ENCODE measurements at regions of chr12 and their contacts with region 1.

Region 1: DNA sequence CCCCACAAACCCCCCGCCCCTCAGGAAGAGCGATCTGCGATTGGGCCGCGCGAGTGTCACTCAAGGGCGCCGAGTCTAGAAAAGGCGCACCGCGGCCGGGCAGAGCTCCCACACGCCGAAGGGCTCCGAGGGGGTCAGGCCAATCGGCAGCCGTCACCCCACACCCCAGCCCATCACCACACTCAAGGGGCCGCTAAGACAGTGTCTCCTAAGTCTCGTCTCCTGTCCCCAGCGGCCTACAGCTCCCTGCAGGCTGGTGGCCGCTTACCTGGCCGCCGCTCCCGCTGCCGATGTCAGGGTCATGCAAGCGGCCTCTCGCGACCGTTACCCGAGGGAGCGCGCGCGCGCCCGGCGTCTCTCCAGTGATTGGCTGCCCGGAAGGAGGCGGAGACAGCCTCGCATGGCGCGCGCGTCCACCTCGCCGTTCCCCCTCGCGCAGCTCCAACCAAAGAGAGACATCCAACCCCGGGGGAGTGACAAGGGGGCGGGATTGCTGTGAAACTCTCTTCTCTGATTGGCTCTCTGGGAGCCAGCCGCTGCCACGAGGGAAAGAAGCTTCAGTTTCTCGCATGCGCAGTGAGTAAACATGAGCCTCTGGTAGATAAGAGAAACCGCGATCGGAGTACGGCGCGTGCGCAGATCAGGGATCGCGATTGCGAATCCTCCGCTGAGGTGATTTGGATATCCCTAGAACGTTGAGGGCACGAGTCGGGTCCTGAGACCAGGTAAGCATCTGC is at the starts of genes MPHOSPH9 and MTRFR:
- DNase-seq: peak; percentile 95
- H3K4me3 ChIP-seq: peak within 1 kb of the TSS; percentile 76 to 100
- H3K27ac ChIP-seq: peak within 1 kb of the TSS; percentile 76 to 83
- H3K4me1 ChIP-seq: peaks cover 4 to 14% of the 10 kb centered on the region in 2 experiments; a peak in 3 of 4 replicates
- H3K27me3 ChIP-seq: no peaks in the 10 kb centered on the region
- CTCF ChIP-seq: no peak
- EP300 ChIP-seq: no peak
- RAD21 ChIP-seq: no peak
- polyA plus RNA-seq, gene MPHOSPH9: 8.2 and 9.0 TPM in 2 replicates
- polyA plus RNA-seq, gene MTRFR: 6.6 and 7.5 TPM in 2 replicates

Region 2: DNA sequence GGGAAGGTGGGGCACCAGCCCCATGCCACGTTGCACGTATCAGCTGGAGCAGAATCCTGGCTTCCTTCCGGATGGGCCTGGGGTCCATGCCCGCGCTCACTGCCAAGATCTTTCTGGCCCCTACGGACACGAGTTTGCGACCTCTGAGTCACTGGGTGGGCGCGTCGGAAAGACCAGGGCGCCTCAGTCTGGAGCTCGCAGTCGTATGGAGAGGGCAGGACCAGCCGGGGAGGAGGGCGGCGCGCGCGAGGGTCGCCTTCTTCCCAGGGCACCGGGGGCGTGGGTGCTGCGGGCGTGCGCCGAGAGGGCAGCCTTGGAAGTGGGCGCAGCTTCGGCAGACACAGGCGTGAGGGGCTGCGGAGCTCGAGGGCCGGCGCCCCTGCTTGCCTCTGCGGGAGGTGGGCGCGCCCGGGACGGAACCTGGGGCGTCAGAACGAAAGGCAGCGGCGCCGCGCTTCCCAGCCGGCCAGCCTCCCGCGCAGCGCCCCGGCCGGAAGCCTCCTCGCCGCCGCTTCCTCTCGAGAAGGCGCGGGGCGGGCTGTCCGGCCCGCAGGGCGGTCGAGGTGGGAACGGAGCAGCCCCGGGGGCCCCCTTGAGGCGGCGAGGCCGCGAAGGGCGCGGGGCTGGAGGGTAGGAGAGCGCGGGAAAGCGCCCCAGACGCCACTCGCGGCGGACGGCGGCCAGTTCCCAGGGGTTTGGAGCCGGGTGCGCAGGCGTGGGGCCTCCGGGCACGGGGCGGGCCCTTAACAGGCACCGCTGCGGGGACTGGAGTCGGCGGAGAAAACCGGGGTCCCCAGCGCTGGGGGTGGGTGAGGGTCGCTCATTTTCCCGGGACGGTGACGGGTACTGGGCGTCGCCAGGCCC is 252.6 kb before region 1 on chr12 and contains the start of gene ARL6IP4:
- CTCF ChIA-PET with region 1: interaction called, 25 read pairs
- POLR2A ChIA-PET with region 1: interaction called, 9 read pairs
- DNase-seq: peak; percentile 91
- H3K4me3 ChIP-seq: peak within 1 kb of the TSS; percentile 96
- H3K27ac ChIP-seq: peak within 1 kb of the TSS; percentile 51 to 76; a peak in 3 of 4 replicates
- H3K4me1 ChIP-seq: peaks cover 13 to 46% of the 10 kb centered on the region in 2 experiments; a peak in 3 of 4 replicates
- H3K27me3 ChIP-seq: no peaks in the 10 kb centered on the region
- CTCF ChIP-seq: no peak
- EP300 ChIP-seq: no peak
- RAD21 ChIP-seq: no peak
- polyA plus RNA-seq, gene ARL6IP4: 321 and 370 TPM in 2 replicates

Region 3: DNA sequence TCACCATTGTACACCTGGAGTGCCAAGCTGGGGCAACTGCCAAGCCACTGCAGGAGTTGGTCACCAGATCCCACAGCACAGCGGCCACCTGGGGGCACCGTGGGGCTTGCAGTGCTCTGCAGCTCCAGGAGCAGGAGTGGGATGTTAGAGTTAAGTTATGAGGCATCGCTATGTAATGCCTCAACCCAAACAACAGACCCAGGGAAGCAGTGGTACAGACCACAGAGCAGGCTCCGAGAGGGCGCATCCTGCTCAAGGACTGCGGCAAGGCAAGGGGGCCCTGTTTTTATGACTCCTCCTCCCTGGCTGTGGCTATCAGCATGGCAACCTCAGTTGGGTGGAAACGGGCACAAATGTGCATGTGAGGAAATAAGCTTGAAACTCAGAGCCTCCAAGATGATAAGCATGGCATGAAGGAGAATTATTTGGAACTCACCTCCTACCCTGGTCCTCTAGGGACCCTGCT is 189.4 kb before region 1 on chr12:
- CTCF ChIA-PET with region 1: interaction called, 88 read pairs
- POLR2A ChIA-PET with region 1: interaction called, 6 read pairs
- DNase-seq: peak; percentile 77
- H3K4me3 ChIP-seq: no peak overlapping the region
- H3K27ac ChIP-seq: peak overlapping the region in 1 of 2 experiments; percentile 44; a peak in 2 of 4 replicates
- H3K4me1 ChIP-seq: peaks cover 7 to 31% of the 10 kb centered on the region in 2 experiments; a peak in 2 of 4 replicates
- H3K27me3 ChIP-seq: no peaks in the 10 kb centered on the region
- CTCF ChIP-seq: peak; percentile 86
- EP300 ChIP-seq: no peak; a peak in 1 of 4 replicates
- RAD21 ChIP-seq: peak; percentile 92

Region 4: DNA sequence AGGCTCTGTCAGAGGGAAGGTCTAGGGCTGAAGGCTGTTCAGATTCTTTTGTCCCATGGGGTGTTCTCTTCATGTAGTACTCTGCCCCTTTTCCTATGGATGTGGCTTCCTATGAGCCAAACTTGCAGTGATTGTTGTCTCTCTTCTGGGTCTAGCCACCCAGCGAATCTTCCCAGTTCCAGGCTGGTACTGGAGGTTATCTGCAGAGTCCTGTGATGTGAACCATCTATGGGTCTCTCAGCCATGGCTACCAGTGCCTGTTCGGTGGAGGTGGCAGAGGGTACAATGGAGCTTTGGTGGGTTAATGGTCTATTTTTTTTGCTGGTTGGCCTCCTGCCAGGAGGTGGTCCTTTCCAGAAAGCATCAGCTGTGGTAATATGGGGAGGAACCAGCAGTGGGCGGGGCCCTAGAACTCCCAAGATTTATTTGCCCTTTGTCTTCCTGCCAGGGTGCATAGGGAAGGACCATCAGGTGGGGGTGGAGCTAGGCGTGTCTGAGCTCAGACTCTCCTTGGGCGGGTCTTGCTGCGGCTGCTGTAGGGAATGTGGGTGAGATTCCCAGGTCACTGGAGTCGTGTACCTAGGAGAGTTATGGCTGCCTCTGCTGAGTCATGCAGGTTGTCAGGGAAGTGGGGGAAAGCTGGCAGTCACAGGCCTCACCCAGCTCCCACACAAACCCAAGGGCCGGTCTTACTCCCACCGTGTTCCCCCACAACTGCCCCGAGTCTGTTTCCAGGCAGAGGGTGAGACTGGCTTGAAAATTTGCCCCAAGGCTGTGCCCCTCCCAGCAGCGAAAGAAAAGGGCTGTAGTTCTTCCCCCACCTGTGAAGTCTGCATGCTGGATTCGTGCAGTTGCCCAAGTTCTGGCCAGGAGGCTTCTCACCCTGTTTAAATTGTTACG is 17.8 kb after region 1 on chr12:
- CTCF ChIA-PET with region 1: interaction called, 17 read pairs
- POLR2A ChIA-PET with region 1: interaction called, 6 read pairs
- DNase-seq: no peak
- H3K4me3 ChIP-seq: no peak overlapping the region
- H3K27ac ChIP-seq: no peak overlapping the region; a peak in 1 of 4 replicates
- H3K4me1 ChIP-seq: peaks cover 0 to 3% of the 10 kb centered on the region in 2 experiments; a peak in 2 of 4 replicates
- H3K27me3 ChIP-seq: no peaks in the 10 kb centered on the region
- CTCF ChIP-seq: no peak
- EP300 ChIP-seq: no peak
- RAD21 ChIP-seq: no peak

Region 5: DNA sequence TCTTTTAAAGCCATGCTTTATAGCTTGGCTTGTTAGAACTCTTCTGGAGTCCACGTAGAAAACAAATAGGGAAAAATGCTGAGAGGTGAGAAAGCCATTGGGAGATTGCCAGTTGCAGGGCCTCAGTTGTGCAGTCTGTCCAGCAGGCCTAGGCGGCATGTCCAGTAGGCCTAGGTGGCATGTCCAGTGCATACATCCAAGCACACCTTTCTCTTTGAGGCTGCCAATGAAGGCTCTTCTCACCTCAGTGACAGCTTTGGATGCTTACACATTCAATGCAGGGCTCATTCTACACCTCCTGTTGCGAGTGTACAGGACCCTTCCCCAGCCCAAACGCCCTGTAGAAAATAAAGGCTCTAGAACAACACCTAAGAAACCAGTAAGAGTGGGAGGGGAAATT is 25.6 kb after region 1 on chr12:
- CTCF ChIA-PET with region 1: interaction called, 14 read pairs
- POLR2A ChIA-PET with region 1: interaction called, 4 read pairs
- DNase-seq: no peak
- H3K4me3 ChIP-seq: no peak overlapping the region
- H3K27ac ChIP-seq: no peak overlapping the region
- H3K4me1 ChIP-seq: no peaks in the 10 kb centered on the region
- H3K27me3 ChIP-seq: no peaks in the 10 kb centered on the region
- CTCF ChIP-seq: no peak
- EP300 ChIP-seq: no peak
- RAD21 ChIP-seq: no peak

Region 6: GRCh38 chr12:123271001-123271729 is 38.2 kb after region 1 on chr12:
- CTCF ChIA-PET with region 1: interaction called, 14 read pairs
- POLR2A ChIA-PET with region 1: interaction called, 47 read pairs
- DNase-seq: peak; percentile 89
- H3K4me3 ChIP-seq: peak overlapping the region; percentile 83 to 90; a peak in 3 of 4 replicates
- H3K27ac ChIP-seq: peak overlapping the region in 1 of 2 experiments; percentile 99; a peak in 2 of 4 replicates
- H3K4me1 ChIP-seq: peaks cover 5 to 42% of the 10 kb centered on the region in 2 experiments; a peak in 3 of 4 replicates
- H3K27me3 ChIP-seq: no peaks in the 10 kb centered on the region
- CTCF ChIP-seq: peak; percentile 14; the same call in 1 of the 2 replicates
- EP300 ChIP-seq: no peak
- RAD21 ChIP-seq: peak; percentile 54

Region 7: DNA sequence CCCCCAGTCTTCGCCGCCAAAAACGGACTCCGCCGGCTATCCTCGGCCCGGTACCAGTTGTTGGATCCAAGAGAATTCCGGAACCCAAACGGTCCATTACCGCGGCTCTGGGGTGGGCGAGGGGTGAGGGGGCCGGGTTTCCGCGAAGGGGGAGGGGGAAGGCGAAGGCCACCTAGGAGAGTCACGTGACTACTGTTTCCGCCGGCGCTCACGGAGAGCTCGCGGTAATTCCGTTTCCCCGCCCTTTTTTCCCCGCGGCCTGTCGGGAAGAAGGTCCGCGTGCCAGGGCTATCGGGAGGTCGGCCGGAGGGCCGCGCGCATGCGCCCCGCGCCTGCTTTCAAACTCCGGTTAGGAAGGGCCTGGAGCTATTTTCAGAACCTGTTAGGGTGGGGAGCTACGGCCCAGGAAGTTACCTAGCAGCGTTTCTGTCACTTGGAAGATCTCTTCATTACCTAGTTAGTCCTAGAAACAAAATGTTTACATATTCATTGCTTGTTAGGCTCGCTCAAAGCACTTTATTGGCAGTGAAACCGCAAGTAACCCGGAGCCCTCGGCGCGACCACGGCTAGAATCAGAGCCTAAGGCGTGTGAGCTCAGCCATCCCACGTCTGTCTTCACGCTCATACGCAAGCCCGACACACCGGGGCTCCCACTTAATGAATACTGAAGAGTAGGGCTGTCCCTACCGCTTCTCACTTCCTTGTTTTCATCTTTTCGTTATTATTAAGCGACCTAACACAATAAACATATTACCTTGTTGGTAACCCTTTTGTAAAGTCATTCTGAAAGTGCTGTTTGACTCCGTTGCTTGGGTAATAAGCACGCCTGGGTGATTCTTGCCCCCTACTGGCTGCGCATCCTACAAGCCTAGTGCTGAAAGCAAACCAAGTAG is 132.3 kb after region 1 on chr12:
- CTCF ChIA-PET with region 1: interaction called, 3 read pairs
- POLR2A ChIA-PET with region 1: interaction called, 10 read pairs
- DNase-seq: peak; percentile 97
- H3K4me3 ChIP-seq: peak overlapping the region; percentile 73 to 83
- H3K27ac ChIP-seq: peak overlapping the region; percentile 94 to 98
- H3K4me1 ChIP-seq: no peaks in the 10 kb centered on the region; a peak in 2 of 4 replicates
- H3K27me3 ChIP-seq: no peaks in the 10 kb centered on the region
- CTCF ChIP-seq: peak; percentile 84
- EP300 ChIP-seq: no peak
- RAD21 ChIP-seq: peak; percentile 67

Region 8: DNA sequence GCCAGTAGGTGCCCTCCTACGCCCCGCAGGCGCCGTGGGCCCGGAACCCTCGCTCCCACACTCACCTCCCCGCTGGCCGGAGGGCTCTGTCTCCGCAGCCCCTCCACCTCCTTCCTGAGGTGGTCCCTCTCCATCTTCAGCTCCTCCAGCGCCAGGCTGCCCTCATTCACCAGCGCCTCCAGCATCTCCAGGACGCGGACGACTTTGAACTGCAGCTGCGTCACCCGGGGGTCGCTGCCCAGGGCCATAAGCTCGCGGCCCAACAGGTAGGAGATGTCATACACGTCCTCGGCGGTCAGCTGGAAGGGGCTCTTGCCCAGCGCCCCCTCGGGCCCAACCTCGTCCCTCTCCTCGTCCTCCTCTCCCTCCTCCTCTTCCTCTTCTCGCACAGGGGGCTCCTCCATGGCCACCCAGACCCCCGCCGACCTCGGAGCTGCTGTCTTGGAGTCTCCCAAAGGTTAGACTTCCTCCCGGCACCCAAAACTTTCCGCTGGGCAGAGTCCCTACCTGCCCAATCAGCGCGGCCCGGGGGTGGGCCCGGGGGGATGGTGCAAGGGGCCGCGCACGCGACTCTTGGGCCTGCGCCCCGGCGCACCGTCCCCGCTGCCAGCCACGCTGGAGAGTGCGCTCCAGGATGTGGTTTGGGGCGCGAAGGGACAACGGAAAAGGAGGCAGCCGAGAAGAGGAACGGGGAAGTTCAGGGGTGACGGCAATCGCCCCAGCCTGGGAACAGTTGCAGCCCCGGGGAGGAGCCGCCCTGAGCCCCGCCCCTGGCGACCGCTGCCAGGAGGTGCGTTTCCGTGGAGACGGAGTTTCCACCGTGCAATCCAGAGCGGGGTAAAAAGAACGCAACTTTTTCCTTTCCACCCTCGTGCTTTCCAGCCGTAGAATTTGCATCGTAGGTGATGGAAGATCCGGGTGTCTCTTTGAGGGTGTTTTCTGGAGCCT is 203.3 kb after region 1 on chr12 and contains the start of gene RILPL2:
- CTCF ChIA-PET with region 1: no interaction called
- POLR2A ChIA-PET with region 1: no interaction called
- DNase-seq: peak; percentile 88
- H3K4me3 ChIP-seq: peak within 1 kb of the TSS; percentile 68 to 91
- H3K27ac ChIP-seq: peak within 1 kb of the TSS; percentile 30 to 49; a peak in 2 of 4 replicates
- H3K4me1 ChIP-seq: peaks cover 0 to 3% of the 10 kb centered on the region in 2 experiments; a peak in 1 of 4 replicates
- H3K27me3 ChIP-seq: no peaks in the 10 kb centered on the region
- CTCF ChIP-seq: no peak
- EP300 ChIP-seq: no peak
- RAD21 ChIP-seq: no peak
- polyA plus RNA-seq, gene RILPL2: 5.0 and 5.2 TPM in 2 replicates

Measured in SK-N-SH (cell line).